CD8-positive, alpha-beta T cell (primary cell): ENCODE measurements at regions of chr12 and their contacts with region 1.

Region 1: GRCh38 chr12:50222275-50222795 is 55.2 kb upstream of the CERS5 start:
- DNase-seq: peak in 3 of 9 experiments; percentile 47 to 67 (median 56)
- ATAC-seq: peak; percentile 56
- H3K4me3 ChIP-seq: peak overlapping the region; percentile 56 to 68
- H3K4me3 Mint-ChIP-seq: no peak overlapping the region
- H3K27ac ChIP-seq: peak overlapping the region; percentile 46 to 84
- H3K27ac Mint-ChIP-seq: no peak overlapping the region
- H3K4me1 ChIP-seq: peaks cover 27% of the 10 kb centered on the region
- H3K4me1 Mint-ChIP-seq: peaks cover 33% of the 10 kb centered on the region
- H3K27me3 ChIP-seq: no peaks in the 10 kb centered on the region
- H3K27me3 Mint-ChIP-seq: no peaks in the 10 kb centered on the region
- CTCF ChIP-seq: no peak

Region 2: GRCh38 chr12:50211392-50212070 is 10.8 kb before region 1 on chr12:
- CTCF ChIA-PET with region 1: interaction called, 17 read pairs
- POLR2A ChIA-PET with region 1: interaction called, 18 read pairs
- intact Hi-C with region 1: no loop called
- DNase-seq: peak in 2 of 9 experiments; percentile 30 to 62
- ATAC-seq: no peak
- H3K4me3 ChIP-seq: no peak overlapping the region
- H3K4me3 Mint-ChIP-seq: peak overlapping the region; percentile 70
- H3K27ac ChIP-seq: peak overlapping the region; percentile 20 to 81
- H3K27ac Mint-ChIP-seq: peak overlapping the region; percentile 94
- H3K4me1 ChIP-seq: peaks cover 34% of the 10 kb centered on the region
- H3K4me1 Mint-ChIP-seq: peaks cover 47% of the 10 kb centered on the region
- H3K27me3 ChIP-seq: no peaks in the 10 kb centered on the region
- H3K27me3 Mint-ChIP-seq: no peaks in the 10 kb centered on the region
- CTCF ChIP-seq: no peak

Region 3: DNA sequence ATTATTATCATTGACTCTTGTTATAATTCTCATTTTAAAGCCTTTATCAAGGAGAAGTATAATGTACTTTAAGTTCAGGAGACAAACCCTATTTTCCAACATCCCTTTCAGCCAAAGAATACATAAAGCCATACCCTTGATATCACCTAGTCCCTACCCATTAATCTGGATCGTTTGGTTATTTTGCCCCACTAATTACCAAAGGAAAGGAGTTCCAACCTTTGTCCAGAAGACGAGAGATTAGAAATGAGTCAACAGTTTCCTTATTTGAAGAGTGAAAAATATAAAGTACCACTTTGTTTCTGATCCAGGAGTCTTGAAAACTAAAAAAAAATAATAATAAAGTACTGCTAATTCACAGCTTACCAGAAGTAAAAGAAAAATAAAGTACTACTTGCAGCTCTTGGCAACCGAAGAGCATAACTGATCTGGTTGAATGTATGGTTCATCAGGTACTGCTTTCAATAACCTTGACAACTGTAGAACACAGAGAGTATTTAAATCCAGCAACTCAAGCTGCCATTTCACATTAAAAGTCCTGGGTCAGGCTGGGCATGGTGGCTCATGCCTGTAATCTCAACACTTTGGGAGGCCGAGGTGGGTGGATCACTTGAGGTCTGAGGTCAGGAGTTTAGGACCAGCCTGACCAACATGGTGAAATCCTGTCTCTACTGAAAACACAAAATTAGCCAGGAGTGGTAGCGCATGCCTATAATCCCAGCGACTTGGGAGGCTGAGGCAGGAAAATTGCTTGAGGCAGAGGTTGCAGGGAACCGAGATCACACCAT is 27.3 kb after region 1 on chr12:
- CTCF ChIA-PET with region 1: no interaction called
- POLR2A ChIA-PET with region 1: no interaction called
- intact Hi-C with region 1: loop called in 1 of 2 experiments (anchors 1 kb)
- DNase-seq: no peak
- ATAC-seq: no peak
- H3K4me3 ChIP-seq: no peak overlapping the region
- H3K4me3 Mint-ChIP-seq: no peak overlapping the region
- H3K27ac ChIP-seq: no peak overlapping the region
- H3K27ac Mint-ChIP-seq: no peak overlapping the region
- H3K4me1 ChIP-seq: no peaks in the 10 kb centered on the region
- H3K4me1 Mint-ChIP-seq: no peaks in the 10 kb centered on the region
- H3K27me3 ChIP-seq: no peaks in the 10 kb centered on the region
- H3K27me3 Mint-ChIP-seq: no peaks in the 10 kb centered on the region
- CTCF ChIP-seq: no peak

Region 4: GRCh38 chr12:50333441-50333840 is 111.1 kb after region 1 on chr12:
- CTCF ChIA-PET with region 1: no interaction called
- POLR2A ChIA-PET with region 1: no interaction called
- intact Hi-C with region 1: no loop called
- DNase-seq: no peak
- ATAC-seq: no peak
- H3K4me3 ChIP-seq: no peak overlapping the region
- H3K4me3 Mint-ChIP-seq: no peak overlapping the region
- H3K27ac ChIP-seq: no peak overlapping the region
- H3K27ac Mint-ChIP-seq: no peak overlapping the region
- H3K4me1 ChIP-seq: no peaks in the 10 kb centered on the region
- H3K4me1 Mint-ChIP-seq: no peaks in the 10 kb centered on the region
- H3K27me3 ChIP-seq: no peaks in the 10 kb centered on the region
- H3K27me3 Mint-ChIP-seq: no peaks in the 10 kb centered on the region
- CTCF ChIP-seq: no peak